Activated CD8-positive, alpha-beta memory T cell treated with anti-CD3 and anti-CD28 coated beads, Interleukin-2, amount 10 ng/mL, durations not matched to agents 7 days and 5 days (primary cell): ENCODE measurements at regions of chr12 and their contacts with region 1.

Region 1: DNA sequence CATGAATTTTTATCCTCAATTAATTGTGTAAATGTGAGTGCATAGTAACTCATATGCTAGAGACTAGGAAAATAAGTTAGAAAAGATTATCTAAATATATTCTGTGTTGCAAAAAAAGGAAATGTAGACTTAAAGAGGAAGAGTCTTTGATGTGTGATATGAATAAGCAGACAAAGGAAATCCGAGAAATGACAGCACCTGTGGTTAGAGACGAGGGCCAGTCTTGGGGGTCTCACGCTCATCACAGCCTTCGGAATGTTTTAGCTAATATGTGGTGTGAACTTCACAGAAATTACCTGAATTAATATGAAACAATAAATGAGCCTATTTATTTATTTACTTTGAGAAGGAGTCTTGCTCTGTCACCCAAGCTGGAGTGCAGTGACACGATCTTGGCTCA is 11.6 kb downstream of the ATP6V0A2 start:
- DNase-seq: peak; percentile 62
- ATAC-seq: peak; percentile 72
- H3K4me3 Mint-ChIP-seq: no peak overlapping the region
- H3K27ac Mint-ChIP-seq: peak overlapping the region; percentile 81
- H3K4me1 Mint-ChIP-seq: peaks cover 76% of the 10 kb centered on the region
- H3K27me3 Mint-ChIP-seq: no peaks in the 10 kb centered on the region

Region 2: DNA sequence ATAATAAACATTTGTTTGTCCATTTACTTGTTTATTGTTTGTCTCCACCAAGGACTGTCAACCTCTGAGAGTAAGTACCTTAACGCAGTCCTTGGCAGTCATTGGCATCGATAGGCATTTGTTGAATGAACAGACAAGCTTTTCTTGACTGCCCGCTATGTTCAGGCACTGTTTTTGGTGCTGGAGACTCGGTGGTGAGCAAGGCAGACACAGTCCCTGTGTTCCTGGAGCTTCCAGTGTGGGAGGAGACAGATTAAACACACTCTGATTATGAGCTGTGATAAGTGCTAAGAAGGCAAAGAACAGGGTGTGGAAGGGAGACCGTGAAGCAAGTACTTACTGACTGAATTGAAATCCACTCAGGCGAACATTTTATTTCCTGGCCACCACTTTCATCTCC is 10.4 kb before region 1 on chr12:
- CTCF ChIA-PET with region 1: interaction called, 17 read pairs
- DNase-seq: no peak
- ATAC-seq: no peak
- H3K4me3 Mint-ChIP-seq: peak overlapping the region; percentile 83
- H3K27ac Mint-ChIP-seq: peak overlapping the region; percentile 85
- H3K4me1 Mint-ChIP-seq: peaks cover 44% of the 10 kb centered on the region
- H3K27me3 Mint-ChIP-seq: no peaks in the 10 kb centered on the region

Region 3: DNA sequence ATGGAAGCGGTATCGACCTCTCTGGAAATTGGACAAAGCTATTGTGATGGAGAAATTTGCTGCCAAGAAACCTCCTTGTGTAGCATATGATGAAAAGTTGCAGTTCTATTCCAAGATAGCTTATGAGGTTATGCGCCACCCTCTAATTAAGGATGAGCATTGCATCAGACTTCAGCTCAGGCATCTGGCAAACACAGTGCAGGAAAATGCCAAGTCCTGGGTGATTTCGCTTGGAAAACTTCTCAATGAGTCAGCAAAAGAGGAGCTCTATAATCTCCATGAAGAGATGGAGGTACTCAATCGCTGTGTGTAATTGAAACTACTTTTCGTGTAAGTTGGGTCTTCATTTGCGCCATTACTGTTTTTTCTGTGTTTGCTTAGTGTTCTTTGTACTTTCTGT is 89.6 kb after region 1 on chr12:
- CTCF ChIA-PET with region 1: no interaction called
- DNase-seq: no peak
- ATAC-seq: no peak
- H3K4me3 Mint-ChIP-seq: no peak overlapping the region
- H3K27ac Mint-ChIP-seq: no peak overlapping the region
- H3K4me1 Mint-ChIP-seq: peaks cover 10% of the 10 kb centered on the region
- H3K27me3 Mint-ChIP-seq: peaks cover 9% of the 10 kb centered on the region